CD8-positive, alpha-beta memory T cell (primary cell): ENCODE measurements at regions of chr1 and their contacts with region 1.

Region 1: GRCh38 chr1:111739194-111739924 is at the start of gene INKA2:
- DNase-seq: peak; percentile 37 to 69 (median 50)
- H3K4me3 ChIP-seq: peak within 1 kb of the TSS; percentile 74
- H3K4me3 Mint-ChIP-seq: peak within 1 kb of the TSS; percentile 85 to 96 (median 89)
- H3K27ac ChIP-seq: no peak within 1 kb of the TSS
- H3K27ac Mint-ChIP-seq: peak within 1 kb of the TSS in 7 of 8 donors; percentile 21 to 91 (median 85)
- H3K4me1 ChIP-seq: peaks cover 22% of the 10 kb centered on the region
- H3K4me1 Mint-ChIP-seq: peaks cover 15 to 26% (median 16%) of the 10 kb centered on the region in 3 donors
- H3K27me3 ChIP-seq: peaks cover 30% of the 10 kb centered on the region
- H3K27me3 Mint-ChIP-seq: peaks cover 16% of the 10 kb centered on the region in 2 donors
- total RNA-seq, gene INKA2: 1.8 to 3.8 TPM

Region 2: GRCh38 chr1:111690306-111690617 is 49.1 kb before region 1 on chr1:
- CTCF ChIA-PET with region 1: no interaction called
- POLR2A ChIA-PET with region 1: no interaction called
- DNase-seq: no peak
- H3K4me3 ChIP-seq: no peak overlapping the region
- H3K4me3 Mint-ChIP-seq: peak overlapping the region in 1 of 7 donors; percentile 1
- H3K27ac ChIP-seq: no peak overlapping the region
- H3K27ac Mint-ChIP-seq: peak overlapping the region; percentile 13 to 78 (median 64)
- H3K4me1 ChIP-seq: peaks cover 8% of the 10 kb centered on the region
- H3K4me1 Mint-ChIP-seq: peaks cover 63 to 90% (median 82%) of the 10 kb centered on the region in 3 donors
- H3K27me3 ChIP-seq: no peaks in the 10 kb centered on the region
- H3K27me3 Mint-ChIP-seq: no peaks in the 10 kb centered on the region

Region 3: GRCh38 chr1:111769517-111770146 is 30.3 kb after region 1 on chr1:
- CTCF ChIA-PET with region 1: interaction called, 15 read pairs
- POLR2A ChIA-PET with region 1: no interaction called
- DNase-seq: peak in 3 of 5 donors; percentile 38 to 53 (median 49)
- H3K4me3 ChIP-seq: no peak overlapping the region
- H3K4me3 Mint-ChIP-seq: no peak overlapping the region
- H3K27ac ChIP-seq: no peak overlapping the region
- H3K27ac Mint-ChIP-seq: peak overlapping the region in 6 of 8 donors; percentile 1 to 65 (median 24)
- H3K4me1 ChIP-seq: no peaks in the 10 kb centered on the region
- H3K4me1 Mint-ChIP-seq: peaks cover 2 to 6% (median 5%) of the 10 kb centered on the region in 3 donors
- H3K27me3 ChIP-seq: no peaks in the 10 kb centered on the region
- H3K27me3 Mint-ChIP-seq: no peaks in the 10 kb centered on the region

Region 4: GRCh38 chr1:111880881-111881837 is 141.8 kb after region 1 on chr1:
- CTCF ChIA-PET with region 1: no interaction called
- POLR2A ChIA-PET with region 1: no interaction called
- DNase-seq: no peak
- H3K4me3 ChIP-seq: no peak overlapping the region
- H3K4me3 Mint-ChIP-seq: no peak overlapping the region
- H3K27ac ChIP-seq: no peak overlapping the region
- H3K27ac Mint-ChIP-seq: no peak overlapping the region
- H3K4me1 ChIP-seq: no peaks in the 10 kb centered on the region
- H3K4me1 Mint-ChIP-seq: no peaks in the 10 kb centered on the region
- H3K27me3 ChIP-seq: peaks cover 9% of the 10 kb centered on the region
- H3K27me3 Mint-ChIP-seq: peaks cover 21 to 77% of the 10 kb centered on the region in 2 donors